ENCODE measurements at regions of chr4 and their contacts with region 1.

Region 1: DNA sequence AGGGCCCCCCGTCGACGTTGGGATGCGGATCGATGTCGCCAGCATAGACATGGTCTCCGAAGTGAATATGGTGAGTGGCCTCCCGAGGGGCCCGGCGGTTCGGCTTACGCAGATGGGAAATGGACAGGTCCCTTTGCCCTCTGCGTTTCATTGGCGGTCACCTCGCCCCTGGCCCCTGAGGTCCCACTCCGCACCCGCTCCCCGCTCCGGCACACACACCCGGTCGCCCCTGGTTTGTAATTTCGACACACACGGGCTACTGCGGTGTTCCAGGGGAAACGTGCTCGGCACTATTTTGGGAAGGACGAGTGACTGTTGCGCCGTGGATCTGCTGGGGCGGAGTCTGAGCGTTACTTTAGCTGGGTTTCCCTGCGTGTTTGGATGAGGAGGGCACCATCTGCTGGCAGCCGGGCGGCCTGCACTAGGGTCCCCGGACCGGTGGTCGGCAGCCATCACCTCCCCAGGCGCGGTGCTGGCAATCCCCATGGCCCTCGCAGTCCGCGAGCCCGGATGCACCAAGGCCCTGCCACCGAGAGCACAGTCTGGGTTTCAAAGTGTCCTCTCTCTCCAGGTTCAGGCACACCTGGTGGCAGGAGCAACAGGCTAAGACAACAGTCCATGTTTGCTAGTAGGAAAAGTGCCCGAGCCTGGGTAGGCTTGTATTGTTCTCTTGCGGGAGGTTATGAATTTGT is 1.2 kb downstream of the GABRB1 start:
- DNase-seq: peak; percentile 37
- ATAC-seq: peak; percentile 99
- H3K4me3 ChIP-seq: peak overlapping the region; percentile 51 to 73 (median 51)
- H3K27ac ChIP-seq: no peak overlapping the region
- H3K4me1 ChIP-seq: peaks cover 16% of the 10 kb centered on the region
- H3K27me3 ChIP-seq: peaks cover 0 to 9% of the 10 kb centered on the region in 2 experiments; a peak in 2 of 5 replicates
- CTCF ChIP-seq: peak; percentile 94
- EP300 ChIP-seq: no peak
- POLR2A ChIP-seq: no peak
- RAD21 ChIP-seq: peak; percentile 70

Region 2: DNA sequence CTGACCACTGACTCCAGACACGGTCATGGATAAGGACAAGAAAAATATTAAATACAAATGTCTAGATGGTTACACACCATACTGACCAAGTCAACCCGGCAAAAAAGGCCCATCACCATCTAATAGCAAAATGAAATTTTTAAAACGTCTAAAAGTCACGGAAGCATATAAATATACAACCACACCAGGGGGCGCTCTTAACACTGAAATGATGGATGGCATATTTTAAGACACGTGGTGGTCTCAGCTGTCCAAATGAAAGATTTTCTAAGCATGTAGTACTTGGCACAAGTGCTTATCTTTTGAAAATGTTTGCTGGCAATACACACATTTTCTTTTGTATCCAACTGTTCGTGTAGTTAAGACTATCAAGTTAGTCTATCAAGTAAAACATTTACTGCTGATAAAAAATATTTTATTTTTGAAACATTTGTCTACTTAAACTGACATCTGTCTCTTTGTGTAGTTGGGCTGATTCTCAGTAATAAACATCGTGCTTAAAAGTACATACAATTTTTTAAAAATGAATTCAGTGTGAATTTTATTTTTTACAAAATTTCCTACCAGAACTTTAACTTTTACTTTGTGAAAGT is 188.1 kb before region 1 on chr4:
- CTCF ChIA-PET with region 1: interaction called, 22 read pairs
- POLR2A ChIA-PET with region 1: no interaction called
- in situ Hi-C with region 1: no loop called
- intact Hi-C with region 1: loop called (anchors 1 kb)
- DNase-seq: peak; percentile 50
- ATAC-seq: peak; percentile 60
- H3K4me3 ChIP-seq: no peak overlapping the region
- H3K27ac ChIP-seq: no peak overlapping the region
- H3K4me1 ChIP-seq: no peaks in the 10 kb centered on the region
- H3K27me3 ChIP-seq: no peaks in the 10 kb centered on the region
- CTCF ChIP-seq: peak; percentile 71
- EP300 ChIP-seq: no peak
- POLR2A ChIP-seq: no peak
- RAD21 ChIP-seq: peak; percentile 44; the same call in 1 of the 2 replicates

Region 3: DNA sequence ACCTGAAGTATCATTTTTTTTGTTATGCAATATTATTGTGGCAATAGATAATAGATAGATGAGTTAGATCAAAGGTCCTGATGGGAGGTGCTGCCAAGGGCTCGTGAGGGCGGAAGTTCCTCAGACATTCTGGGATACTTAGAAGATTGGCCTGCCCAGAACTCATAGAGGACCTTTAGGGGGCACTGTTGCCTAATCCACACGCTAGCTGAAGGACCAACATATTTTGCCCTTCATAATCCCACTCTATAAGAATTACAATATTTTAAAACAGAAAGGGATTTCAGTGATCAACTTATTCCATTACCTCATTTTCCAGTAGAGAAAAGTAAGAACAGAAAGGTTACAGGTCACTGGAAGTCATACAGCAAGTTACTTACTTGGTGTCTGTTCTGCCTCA is 100.6 kb before region 1 on chr4:
- CTCF ChIA-PET with region 1: interaction called, 14 read pairs
- POLR2A ChIA-PET with region 1: no interaction called
- in situ Hi-C with region 1: loop called (anchors 10 kb)
- intact Hi-C with region 1: loop called (anchors 1 kb)
- DNase-seq: peak; percentile 3
- ATAC-seq: peak; percentile 86
- H3K4me3 ChIP-seq: no peak overlapping the region
- H3K27ac ChIP-seq: no peak overlapping the region
- H3K4me1 ChIP-seq: 0 out of 2 replicates have a peak, but pooled peaks cover 9% of the 10 kb centered on the region
- H3K27me3 ChIP-seq: no peaks in the 10 kb centered on the region
- CTCF ChIP-seq: peak; percentile 58
- EP300 ChIP-seq: no peak
- POLR2A ChIP-seq: no peak
- RAD21 ChIP-seq: no peak

Region 4: GRCh38 chr4:46937493-46937892 is 95.1 kb before region 1 on chr4:
- CTCF ChIA-PET with region 1: interaction called, 14 read pairs
- POLR2A ChIA-PET with region 1: no interaction called
- in situ Hi-C with region 1: loop called (anchors 10 kb)
- intact Hi-C with region 1: loop called (anchors 1 kb)
- DNase-seq: no peak
- ATAC-seq: no peak
- H3K4me3 ChIP-seq: no peak overlapping the region
- H3K27ac ChIP-seq: no peak overlapping the region
- H3K4me1 ChIP-seq: 0 out of 2 replicates have a peak, but pooled peaks cover 9% of the 10 kb centered on the region
- H3K27me3 ChIP-seq: no peaks in the 10 kb centered on the region
- CTCF ChIP-seq: no peak
- EP300 ChIP-seq: no peak
- POLR2A ChIP-seq: no peak
- RAD21 ChIP-seq: no peak

Region 5: DNA sequence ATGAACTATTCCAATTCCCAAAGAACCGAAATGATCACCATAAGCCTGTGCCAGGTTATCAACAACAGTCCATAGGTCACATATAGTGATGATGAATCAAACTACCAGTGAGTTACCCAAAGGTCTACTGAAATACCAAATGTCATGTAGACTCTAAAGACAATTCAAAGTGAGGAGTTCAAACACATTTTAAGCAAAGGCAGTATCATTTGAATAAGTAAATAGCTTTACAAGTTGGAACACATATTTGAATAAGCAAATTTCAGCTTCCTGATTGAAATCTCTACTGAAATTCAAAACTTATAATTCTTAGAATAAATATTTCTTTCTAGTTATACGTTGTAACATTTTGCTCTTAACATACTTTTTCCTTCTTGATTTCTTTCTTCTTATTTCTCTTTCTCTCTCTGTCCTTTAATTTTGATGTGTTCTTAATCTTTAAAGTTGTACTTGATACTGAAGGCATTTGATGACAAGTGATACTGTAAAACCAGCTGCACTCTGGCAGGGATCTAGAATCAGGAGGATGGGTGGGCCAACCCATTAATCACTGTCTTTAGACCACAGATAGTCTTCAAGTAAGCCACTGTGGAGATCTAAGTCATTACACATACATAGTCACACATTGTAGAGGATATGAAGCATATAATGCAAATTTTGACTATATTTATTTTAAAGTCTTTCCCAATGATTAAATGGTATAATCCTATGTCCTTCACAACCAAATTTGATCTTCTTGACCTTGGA is 73.6 kb before region 1 on chr4:
- CTCF ChIA-PET with region 1: no interaction called
- POLR2A ChIA-PET with region 1: no interaction called
- in situ Hi-C with region 1: no loop called
- intact Hi-C with region 1: no loop called
- DNase-seq: no peak
- ATAC-seq: no peak
- H3K4me3 ChIP-seq: no peak overlapping the region
- H3K27ac ChIP-seq: no peak overlapping the region
- H3K4me1 ChIP-seq: no peaks in the 10 kb centered on the region
- H3K27me3 ChIP-seq: no peaks in the 10 kb centered on the region
- CTCF ChIP-seq: no peak
- EP300 ChIP-seq: no peak
- POLR2A ChIP-seq: no peak
- RAD21 ChIP-seq: no peak

Region 6: DNA sequence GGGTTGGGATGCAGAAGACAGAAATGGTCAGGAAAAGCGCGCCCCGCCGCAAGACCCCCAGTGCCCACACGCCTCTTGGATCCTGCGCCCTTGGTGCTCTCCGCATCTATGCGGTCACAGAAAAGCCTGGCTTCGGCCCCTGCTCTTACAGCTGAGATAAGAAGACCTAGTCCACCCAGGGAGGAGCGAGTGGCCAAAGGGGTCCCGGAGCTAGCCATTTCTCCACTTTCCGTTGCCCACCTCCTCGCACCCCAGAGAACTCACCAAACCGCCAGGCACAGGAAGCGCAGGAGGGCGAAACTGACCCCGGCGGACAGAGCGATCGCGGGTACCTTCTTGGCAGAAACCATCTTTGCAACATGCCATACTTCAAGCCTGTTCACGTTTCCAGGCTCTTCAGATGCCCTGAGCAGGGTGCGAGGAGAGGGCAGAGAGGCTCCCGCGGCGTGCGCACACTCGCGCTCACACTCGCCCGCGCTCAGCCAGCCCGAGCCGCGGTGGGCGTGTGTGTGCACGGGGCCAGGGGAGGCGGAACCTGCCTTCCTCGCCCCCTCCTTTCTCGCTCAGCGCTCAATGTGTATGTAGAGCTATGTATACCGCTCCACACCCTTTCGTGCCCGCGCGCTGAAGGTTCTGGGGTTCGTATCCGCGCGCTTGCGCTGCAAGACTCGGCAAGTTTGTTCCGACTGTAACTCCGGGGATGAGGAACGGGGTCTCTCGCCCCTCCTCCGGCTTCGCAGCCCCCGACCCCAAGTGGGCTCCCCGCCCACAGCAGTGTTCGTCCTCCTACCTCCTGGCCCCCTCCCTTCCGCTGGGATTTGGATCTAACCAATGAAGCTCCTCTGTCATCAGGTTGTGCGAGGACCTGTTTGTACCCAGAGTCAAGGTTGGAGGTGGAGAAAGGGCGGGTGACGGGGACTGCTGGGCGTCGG is 39.2 kb before region 1 on chr4 and contains the start of gene GABRA4:
- CTCF ChIA-PET with region 1: no interaction called
- POLR2A ChIA-PET with region 1: no interaction called
- in situ Hi-C with region 1: no loop called
- intact Hi-C with region 1: no loop called
- DNase-seq: no peak
- ATAC-seq: peak; percentile 53
- H3K4me3 ChIP-seq: no peak within 1 kb of the TSS; a peak in 1 of 6 replicates
- H3K27ac ChIP-seq: no peak within 1 kb of the TSS
- H3K4me1 ChIP-seq: no peaks in the 10 kb centered on the region
- H3K27me3 ChIP-seq: peaks cover 2 to 21% of the 10 kb centered on the region in 2 experiments; a peak in 3 of 5 replicates
- CTCF ChIP-seq: no peak
- EP300 ChIP-seq: no peak
- POLR2A ChIP-seq: no peak
- RAD21 ChIP-seq: no peak
- total RNA-seq, gene GABRA4: not detected in 2 replicates

Region 7: DNA sequence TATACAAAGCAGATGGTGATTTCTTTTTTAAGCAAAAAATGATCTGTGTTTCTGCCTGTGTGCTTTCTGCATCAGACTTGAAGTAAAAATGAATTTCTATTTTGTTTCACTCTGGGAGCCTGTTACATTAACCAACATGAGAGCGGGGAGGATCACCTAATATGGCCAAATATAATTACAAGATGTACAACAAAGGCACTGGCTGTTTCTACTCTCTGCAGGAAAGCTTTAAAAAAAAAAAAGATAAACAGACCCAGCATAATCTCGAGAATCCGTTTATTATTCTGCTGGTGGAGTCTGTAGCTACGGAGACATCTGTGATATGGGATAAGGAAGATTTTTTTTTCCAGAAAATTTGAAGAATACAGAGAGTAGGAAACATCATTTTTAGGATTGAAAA is 327.3 kb after region 1 on chr4:
- CTCF ChIA-PET with region 1: no interaction called
- POLR2A ChIA-PET with region 1: no interaction called
- in situ Hi-C with region 1: no loop called
- intact Hi-C with region 1: no loop called
- DNase-seq: no peak
- ATAC-seq: no peak
- H3K4me3 ChIP-seq: no peak overlapping the region
- H3K27ac ChIP-seq: no peak overlapping the region
- H3K4me1 ChIP-seq: no peaks in the 10 kb centered on the region
- H3K27me3 ChIP-seq: no peaks in the 10 kb centered on the region
- CTCF ChIP-seq: no peak
- EP300 ChIP-seq: no peak
- POLR2A ChIP-seq: no peak
- RAD21 ChIP-seq: no peak